ENCODE measurements at regions of chr7 and their contacts with region 1.

Region 1: DNA sequence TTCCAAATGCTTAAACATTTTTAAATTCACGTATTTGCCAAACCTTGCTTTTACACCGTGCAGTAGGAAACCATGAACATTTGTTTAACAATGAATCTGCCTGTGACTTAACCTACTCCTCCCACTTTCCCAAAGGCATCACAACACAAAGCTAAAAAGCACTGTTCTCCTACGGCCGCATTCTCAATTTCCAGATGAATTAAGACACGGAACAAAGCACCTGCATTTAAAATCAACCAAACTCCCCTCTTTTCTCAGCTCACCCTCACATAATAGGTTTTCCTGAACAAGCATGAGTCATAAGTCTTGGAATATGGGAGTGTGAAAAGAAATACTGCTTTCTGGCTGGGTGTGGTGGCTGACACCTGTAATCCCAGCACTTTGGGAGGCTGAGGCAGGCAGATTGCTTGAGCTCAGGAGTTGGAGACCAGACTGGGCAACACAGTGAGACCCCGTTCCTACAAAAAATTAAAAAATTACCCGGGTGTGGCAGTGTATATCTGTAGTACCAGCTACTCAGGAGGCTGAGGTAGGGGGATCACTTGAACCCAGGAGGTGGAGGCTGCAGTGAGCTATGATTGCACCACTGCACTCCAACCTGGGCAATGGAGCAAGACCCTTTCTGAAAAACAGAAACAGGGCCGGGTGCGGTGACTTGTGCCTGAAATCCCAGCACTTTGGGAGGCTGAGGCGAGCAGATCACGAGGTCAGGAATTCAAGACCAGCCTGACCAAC is 51.7 kb upstream of the CYTH3 start:
- DNase-seq: no peak
- H3K4me3 Mint-ChIP-seq: no peak overlapping the region
- H3K27ac Mint-ChIP-seq: no peak overlapping the region
- H3K4me1 Mint-ChIP-seq: peaks cover 3% of the 10 kb centered on the region
- H3K27me3 Mint-ChIP-seq: no peaks in the 10 kb centered on the region

Region 2: GRCh38 chr7:5854738-5855137 is 469.4 kb before region 1 on chr7:
- intact Hi-C with region 1: loop called (anchors 5 kb)
- DNase-seq: no peak
- H3K4me3 Mint-ChIP-seq: no peak overlapping the region
- H3K27ac Mint-ChIP-seq: no peak overlapping the region
- H3K4me1 Mint-ChIP-seq: peaks cover 3% of the 10 kb centered on the region
- H3K27me3 Mint-ChIP-seq: no peaks in the 10 kb centered on the region

Region 3: DNA sequence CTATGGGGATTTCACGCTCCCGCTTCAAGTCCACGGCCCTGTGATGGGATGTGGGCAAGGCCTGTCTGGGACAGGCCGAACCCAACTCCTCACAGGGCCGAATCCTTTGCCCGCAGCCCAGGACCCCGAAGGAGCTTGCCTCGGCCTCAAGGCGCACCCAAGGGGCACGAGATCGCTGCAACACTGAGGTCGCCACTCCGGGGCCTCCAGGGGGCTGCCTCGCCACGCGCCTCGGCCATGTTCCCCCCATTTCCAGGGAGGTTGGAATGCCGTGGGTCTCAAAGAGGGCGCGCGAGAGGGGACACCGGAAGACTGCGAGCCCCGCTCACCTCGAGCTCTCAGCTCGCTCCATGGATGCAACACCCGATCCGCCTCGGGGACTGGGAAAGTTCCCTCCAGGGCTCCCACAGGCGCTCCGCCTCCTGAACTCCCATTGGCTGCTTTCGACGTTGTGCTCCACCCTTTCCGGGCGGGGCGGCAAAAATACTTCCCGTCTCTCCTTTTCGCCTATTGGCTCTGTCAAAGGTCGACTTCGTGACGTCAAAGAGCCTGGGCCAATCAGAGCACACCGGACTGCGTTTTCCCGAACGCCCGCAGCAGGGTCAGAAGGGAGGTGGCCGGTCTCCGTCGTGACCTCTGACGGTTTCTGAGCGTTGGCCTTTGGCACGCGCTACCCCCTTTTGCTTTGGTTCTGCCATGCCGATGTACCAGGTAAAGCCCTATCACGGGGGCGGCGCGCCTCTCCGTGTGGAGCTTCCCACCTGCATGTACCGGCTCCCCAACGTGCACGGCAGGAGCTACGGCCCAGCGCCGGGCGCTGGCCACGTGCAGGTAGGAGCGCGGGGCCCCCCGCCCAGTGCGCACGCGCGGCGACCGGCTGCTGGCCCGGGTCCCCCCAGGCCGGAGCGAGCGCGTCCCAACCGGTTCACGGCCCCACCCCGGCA is 315.2 kb before region 1 on chr7 and contains the starts of genes AIMP2 and PMS2:
- intact Hi-C with region 1: loop called (anchors 5 kb)
- DNase-seq: peak; percentile 97
- H3K4me3 Mint-ChIP-seq: peak within 1 kb of the TSS; percentile 87
- H3K27ac Mint-ChIP-seq: peak within 1 kb of the TSS; percentile 91
- H3K4me1 Mint-ChIP-seq: peaks cover 28% of the 10 kb centered on the region
- H3K27me3 Mint-ChIP-seq: no peaks in the 10 kb centered on the region
- total RNA-seq, gene AIMP2: 73.4 and 82.9 TPM in 2 replicates
- total RNA-seq, gene PMS2: 21.2 and 21.5 TPM in 2 replicates

Region 4: GRCh38 chr7:6272481-6273323 is 51.4 kb before region 1 on chr7 and contains the start of gene CYTH3:
- intact Hi-C with region 1: no loop called
- DNase-seq: peak; percentile 73
- H3K4me3 Mint-ChIP-seq: peak within 1 kb of the TSS; percentile 76
- H3K27ac Mint-ChIP-seq: no peak within 1 kb of the TSS
- H3K4me1 Mint-ChIP-seq: peaks cover 18% of the 10 kb centered on the region
- H3K27me3 Mint-ChIP-seq: peaks cover 60% of the 10 kb centered on the region
- total RNA-seq, gene CYTH3: 0.85 and 1.2 TPM in 2 replicates

Region 5: DNA sequence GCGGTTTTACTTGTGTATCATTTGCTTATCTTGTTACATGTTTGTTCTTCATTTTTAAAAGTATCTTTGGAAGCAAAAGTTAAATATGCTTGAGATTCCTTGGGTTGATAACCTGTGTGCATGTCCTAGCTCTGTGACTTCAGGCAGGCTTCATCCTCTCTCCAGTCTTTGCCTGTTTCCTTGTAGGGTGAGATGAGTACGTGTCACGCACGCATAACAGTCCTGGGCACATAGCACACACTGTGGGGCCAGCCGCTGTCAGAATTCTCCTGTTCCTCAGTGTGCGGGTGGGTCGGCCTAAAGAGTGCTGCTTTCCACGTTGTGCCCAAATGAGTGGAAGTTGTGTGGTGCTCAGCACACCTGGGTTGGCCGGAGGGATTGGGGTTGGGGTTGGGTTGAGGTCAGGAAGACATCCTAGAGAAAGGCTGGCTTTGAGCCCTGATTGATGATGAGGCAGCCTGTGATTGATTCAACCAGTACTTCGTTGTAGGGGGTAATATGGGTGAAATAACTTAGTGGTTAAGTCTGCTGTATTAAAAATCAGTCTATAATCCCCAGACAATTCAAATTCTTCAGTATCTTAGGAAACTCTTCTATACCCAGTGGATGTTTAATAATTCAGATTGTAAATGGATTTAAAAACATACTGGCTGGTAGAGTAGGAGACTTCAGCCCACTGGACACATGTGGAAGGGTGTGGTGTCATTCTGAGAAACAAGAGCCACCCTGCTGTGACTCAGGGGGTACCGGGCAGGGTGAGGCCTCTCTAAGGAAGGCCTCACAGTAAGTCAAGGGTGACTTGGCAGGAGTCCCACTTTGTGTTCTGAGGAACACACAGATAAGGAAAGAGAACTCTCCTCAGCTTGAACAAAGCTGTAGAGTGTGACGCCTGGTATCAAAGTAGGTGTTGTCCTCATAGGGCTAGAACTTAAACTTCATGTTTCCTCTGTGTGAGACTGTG is 68.9 kb after region 1 on chr7:
- intact Hi-C with region 1: no loop called
- DNase-seq: no peak
- H3K4me3 Mint-ChIP-seq: no peak overlapping the region
- H3K27ac Mint-ChIP-seq: peak overlapping the region; percentile 82
- H3K4me1 Mint-ChIP-seq: peaks cover 42% of the 10 kb centered on the region
- H3K27me3 Mint-ChIP-seq: no peaks in the 10 kb centered on the region

Measured in activated T-helper 2 cell treated with anti-CD3 and anti-CD28 coated beads, Interferon-gamma antibody, Interleukin-2, Interleukin-4, amounts not matched to agents 10 μg/mL and 5 μg/mL and 100 μg/mL, durations not matched to agents 14 hours and 24 hours and 36 hours (primary cell).